ENCODE measurements at regions of chr1 and their contacts with region 1.

Region 1: DNA sequence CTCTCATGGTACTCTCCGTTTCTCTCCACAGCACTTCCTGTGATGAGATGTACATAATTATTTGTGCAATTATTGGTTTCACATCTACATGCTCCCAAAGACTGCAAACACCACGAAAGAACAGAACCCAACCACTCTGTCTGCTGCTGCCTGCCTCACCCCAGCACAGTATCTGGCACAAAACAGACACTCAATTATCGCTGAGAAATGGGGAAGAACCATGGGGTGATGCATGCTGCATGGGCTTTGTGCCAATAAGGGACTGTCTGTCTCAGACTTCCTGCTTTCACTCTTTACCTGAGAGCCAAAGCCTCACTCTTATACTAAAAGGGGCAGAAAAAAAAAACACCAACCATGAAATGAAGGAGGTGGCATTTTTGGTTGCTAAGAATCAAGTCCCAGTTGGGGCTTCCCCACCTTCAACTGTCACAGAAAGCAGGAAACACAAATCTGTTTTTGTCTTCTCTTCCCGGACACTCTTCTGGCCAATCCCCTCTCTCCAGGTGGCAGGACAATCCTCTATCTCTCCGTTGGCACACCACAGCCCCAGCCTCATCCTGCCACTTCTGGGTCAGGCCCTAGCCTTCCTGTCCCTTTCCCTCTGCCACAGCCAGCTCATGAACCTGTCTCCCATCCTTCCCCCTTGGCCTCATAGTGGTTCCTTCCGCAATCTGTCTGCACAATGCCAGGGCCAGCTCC is 82.0 kb downstream of the TGFBR3 start:
- DNase-seq: peak; percentile 92
- H3K4me3 Mint-ChIP-seq: peak overlapping the region; percentile 60
- H3K27ac Mint-ChIP-seq: peak overlapping the region; percentile 98
- H3K4me1 Mint-ChIP-seq: peaks cover 31% of the 10 kb centered on the region
- H3K27me3 Mint-ChIP-seq: no peaks in the 10 kb centered on the region

Region 2: DNA sequence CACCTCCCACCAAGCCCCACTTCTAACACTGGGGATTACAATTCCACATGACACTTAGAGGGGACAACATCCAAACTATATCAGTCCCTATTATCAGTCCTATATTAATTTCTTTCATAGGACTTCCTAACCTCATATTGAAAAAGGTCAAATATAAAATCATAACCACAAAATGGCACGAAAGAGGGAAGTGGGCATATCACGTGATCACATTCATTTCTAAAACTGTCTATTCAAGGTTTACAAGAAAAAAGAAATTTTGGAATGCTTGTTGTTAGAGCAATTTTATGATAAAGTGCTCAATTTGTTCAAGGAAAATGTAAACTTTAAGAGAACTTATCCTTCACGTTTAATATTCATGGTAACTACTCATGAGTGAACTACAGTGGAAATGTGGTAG is 316.5 kb before region 1 on chr1:
- CTCF ChIA-PET with region 1: no interaction called
- intact Hi-C with region 1: no loop called
- DNase-seq: no peak
- H3K4me3 Mint-ChIP-seq: no peak overlapping the region
- H3K27ac Mint-ChIP-seq: no peak overlapping the region
- H3K4me1 Mint-ChIP-seq: peaks cover 8% of the 10 kb centered on the region
- H3K27me3 Mint-ChIP-seq: peaks cover 2% of the 10 kb centered on the region

Region 3: DNA sequence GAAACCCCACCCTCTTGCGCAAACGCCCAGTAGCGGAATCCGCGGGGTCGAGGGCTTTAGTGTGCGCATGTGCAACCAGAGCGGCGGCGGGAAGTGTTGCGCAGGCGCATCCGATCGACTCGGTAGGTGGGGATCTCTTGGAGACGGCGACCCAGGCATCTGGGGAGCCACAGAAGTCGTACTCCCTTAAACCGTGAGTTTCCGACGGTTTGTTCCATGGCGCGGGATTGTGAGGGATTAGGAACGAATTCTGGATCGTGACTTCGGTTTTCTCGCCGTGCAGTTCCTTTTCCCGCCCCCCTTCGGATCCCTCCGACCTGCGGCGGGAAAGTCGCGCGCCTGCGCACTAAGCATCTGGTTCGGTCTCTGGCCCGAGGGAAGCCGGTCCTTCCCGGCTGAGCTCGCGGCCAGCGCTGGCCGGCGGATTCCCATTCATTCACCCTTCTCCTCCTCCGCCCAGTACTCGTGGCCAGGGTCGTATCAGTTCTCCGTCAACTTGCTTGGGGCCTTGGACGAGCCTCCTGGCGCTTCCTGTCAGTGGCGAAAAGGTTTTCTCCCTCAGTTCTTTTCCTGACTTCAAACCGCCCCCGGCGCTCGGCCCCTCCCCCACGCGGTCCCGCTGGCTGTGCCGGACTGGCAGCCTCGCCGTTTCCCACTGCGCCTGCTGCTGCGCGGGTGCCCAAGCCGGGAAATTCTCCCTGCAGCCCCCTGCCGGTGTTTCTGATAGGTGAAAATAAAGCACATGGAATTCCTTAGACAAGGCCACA is 303.1 kb before region 1 on chr1 and contains the start of gene CDC7:
- CTCF ChIA-PET with region 1: no interaction called
- intact Hi-C with region 1: loop called (anchors 1 kb)
- DNase-seq: peak; percentile 87
- H3K4me3 Mint-ChIP-seq: no peak within 1 kb of the TSS
- H3K27ac Mint-ChIP-seq: no peak within 1 kb of the TSS
- H3K4me1 Mint-ChIP-seq: peaks cover 15% of the 10 kb centered on the region
- H3K27me3 Mint-ChIP-seq: no peaks in the 10 kb centered on the region
- total RNA-seq, gene CDC7: 27.0 TPM

Region 4: GRCh38 chr1:91712981-91713841 is 90.8 kb before region 1 on chr1:
- CTCF ChIA-PET with region 1: no interaction called
- intact Hi-C with region 1: loop called (anchors 1 kb)
- DNase-seq: peak; percentile 71
- H3K4me3 Mint-ChIP-seq: no peak overlapping the region
- H3K27ac Mint-ChIP-seq: peak overlapping the region; percentile 73
- H3K4me1 Mint-ChIP-seq: peaks cover 25% of the 10 kb centered on the region
- H3K27me3 Mint-ChIP-seq: no peaks in the 10 kb centered on the region

Region 5: GRCh38 chr1:91864017-91864700 is 60.2 kb after region 1 on chr1:
- CTCF ChIA-PET with region 1: no interaction called
- intact Hi-C with region 1: no loop called
- DNase-seq: no peak
- H3K4me3 Mint-ChIP-seq: no peak overlapping the region
- H3K27ac Mint-ChIP-seq: no peak overlapping the region
- H3K4me1 Mint-ChIP-seq: peaks cover 3% of the 10 kb centered on the region
- H3K27me3 Mint-ChIP-seq: no peaks in the 10 kb centered on the region

Region 6: GRCh38 chr1:91885716-91886506 is 81.9 kb after region 1 on chr1 and contains the start of gene TGFBR3:
- CTCF ChIA-PET with region 1: interaction called, 8 read pairs
- intact Hi-C with region 1: loop called (anchors 1 kb)
- DNase-seq: peak; percentile 74
- H3K4me3 Mint-ChIP-seq: peak within 1 kb of the TSS; percentile 85
- H3K27ac Mint-ChIP-seq: peak within 1 kb of the TSS; percentile 46
- H3K4me1 Mint-ChIP-seq: peaks cover 33% of the 10 kb centered on the region
- H3K27me3 Mint-ChIP-seq: peaks cover 15% of the 10 kb centered on the region
- total RNA-seq, gene TGFBR3: 3.2 to 3.3 TPM

Region 7: GRCh38 chr1:92070892-92071291 is 266.9 kb after region 1 on chr1:
- CTCF ChIA-PET with region 1: no interaction called
- intact Hi-C with region 1: no loop called
- DNase-seq: no peak
- H3K4me3 Mint-ChIP-seq: no peak overlapping the region
- H3K27ac Mint-ChIP-seq: no peak overlapping the region
- H3K4me1 Mint-ChIP-seq: no peaks in the 10 kb centered on the region
- H3K27me3 Mint-ChIP-seq: no peaks in the 10 kb centered on the region

Region 8: GRCh38 chr1:92476071-92476631 is 672.2 kb after region 1 on chr1:
- CTCF ChIA-PET with region 1: no interaction called
- intact Hi-C with region 1: loop called (anchors 1 kb)
- DNase-seq: peak; percentile 94
- H3K4me3 Mint-ChIP-seq: peak overlapping the region; percentile 53
- H3K27ac Mint-ChIP-seq: peak overlapping the region; percentile 87
- H3K4me1 Mint-ChIP-seq: peaks cover 85% of the 10 kb centered on the region
- H3K27me3 Mint-ChIP-seq: no peaks in the 10 kb centered on the region

Region 9: DNA sequence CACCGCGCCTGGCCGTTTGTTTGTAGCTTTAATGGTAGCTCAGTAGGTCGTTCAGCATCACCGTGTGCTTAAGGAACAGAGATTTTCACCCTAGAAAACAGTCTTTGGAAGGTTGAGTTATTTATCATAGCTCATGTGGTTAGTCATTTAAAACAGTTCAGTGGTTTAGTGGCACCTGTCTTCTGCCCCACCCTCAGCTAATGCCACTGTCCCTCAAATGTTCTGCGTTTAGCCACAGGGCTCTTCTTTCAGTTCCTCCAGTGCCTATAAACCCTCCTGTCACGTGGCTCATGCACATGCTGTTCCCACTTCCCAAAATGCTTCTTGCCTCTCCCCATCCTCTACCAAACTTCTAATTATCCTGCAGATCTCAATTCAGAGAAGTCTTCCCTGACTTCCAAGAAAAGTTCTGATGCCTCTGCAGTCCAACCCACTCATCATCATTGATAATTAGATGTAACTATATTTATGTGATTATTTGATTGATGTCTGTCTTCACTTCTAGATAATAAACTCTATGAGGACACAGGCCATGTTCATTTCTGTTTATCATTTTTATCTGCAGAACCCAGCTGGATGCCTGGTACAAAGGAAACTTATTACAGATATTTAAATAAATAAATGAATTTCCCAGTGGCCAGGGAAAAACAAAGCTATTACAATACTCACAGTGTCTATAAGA is 1171.7 kb after region 1 on chr1:
- CTCF ChIA-PET with region 1: no interaction called
- intact Hi-C with region 1: loop called (anchors 10 kb)
- DNase-seq: no peak
- H3K4me3 Mint-ChIP-seq: no peak overlapping the region
- H3K27ac Mint-ChIP-seq: peak overlapping the region; percentile 38
- H3K4me1 Mint-ChIP-seq: peaks cover 62% of the 10 kb centered on the region
- H3K27me3 Mint-ChIP-seq: no peaks in the 10 kb centered on the region